Esophagus muscularis mucosa (tissue), 4 donors: ENCODE measurements at regions of chr6 and their contacts with region 1.

Region 1: GRCh38 chr6:52284460-52285176 is at the start of gene MCM3:
- DNase-seq: peak; percentile 99
- H3K4me3 ChIP-seq: peak within 1 kb of the TSS; percentile 73 to 92 (median 83)
- H3K27ac ChIP-seq: peak within 1 kb of the TSS; percentile 70 to 87 (median 73)
- H3K4me1 ChIP-seq: peaks cover 13 to 21% (median 17%) of the 10 kb centered on the region in 4 donors
- H3K27me3 ChIP-seq: no peaks in the 10 kb centered on the region
- CTCF ChIP-seq: no peak
- EP300 ChIP-seq: no peak
- POLR2A ChIP-seq: no peak
- total RNA-seq, gene MCM3: 32.4 to 42.6 (median 41.1) TPM

Region 2: GRCh38 chr6:52361945-52362442 is 77.4 kb after region 1 on chr6 and contains the start of gene PAQR8:
- intact Hi-C with region 1: loop called (anchors 10 kb)
- DNase-seq: no peak
- H3K4me3 ChIP-seq: peak within 1 kb of the TSS; percentile 84 to 100 (median 89)
- H3K27ac ChIP-seq: peak within 1 kb of the TSS; percentile 82 to 88 (median 86)
- H3K4me1 ChIP-seq: peaks cover 16 to 71% (median 70%) of the 10 kb centered on the region in 4 donors
- H3K27me3 ChIP-seq: no peaks in the 10 kb centered on the region
- CTCF ChIP-seq: peak in 2 of 3 experiments; percentile 2 to 20
- EP300 ChIP-seq: no peak
- POLR2A ChIP-seq: no peak
- total RNA-seq, gene PAQR8: 11.1 to 32.5 (median 14.2) TPM

Region 3: DNA sequence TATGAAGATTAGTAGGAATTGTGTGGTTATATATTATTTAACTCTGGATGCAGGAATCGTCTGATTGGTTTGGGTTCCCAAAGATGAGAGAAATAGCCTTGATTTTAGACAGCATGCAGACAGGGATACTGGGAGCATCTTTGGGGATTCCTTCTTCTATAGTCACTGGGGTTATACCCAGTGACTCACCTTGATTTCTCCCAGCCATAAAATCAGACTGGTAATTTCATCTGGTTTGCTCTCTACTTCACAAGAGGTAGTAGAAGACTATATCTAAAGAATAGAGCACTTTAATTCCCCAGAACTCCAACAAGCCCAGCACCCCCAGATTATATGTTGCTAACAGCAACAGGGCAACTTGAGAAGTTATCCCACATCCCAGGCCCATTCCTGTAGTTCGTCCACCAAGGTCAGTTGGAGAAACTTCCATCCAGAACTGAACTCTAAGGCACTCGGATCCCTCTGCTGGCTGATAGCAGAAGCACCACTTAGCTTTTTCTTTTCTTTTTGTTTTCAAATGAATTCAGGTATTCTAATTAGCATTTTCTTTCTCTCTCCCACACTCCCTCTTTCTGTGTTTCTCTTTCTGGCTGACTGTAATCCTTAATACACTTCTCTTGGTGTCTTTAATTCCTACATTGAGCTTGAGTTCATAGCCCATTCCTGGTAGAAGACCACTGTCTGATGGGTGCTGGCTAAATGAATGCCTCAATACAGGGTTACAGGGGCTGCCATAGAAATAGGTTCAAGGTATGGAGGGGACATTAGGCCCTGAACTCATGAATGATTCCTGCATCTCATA is 115.1 kb after region 1 on chr6:
- intact Hi-C with region 1: loop called (anchors 2 kb)
- DNase-seq: no peak
- H3K4me3 ChIP-seq: no peak overlapping the region
- H3K27ac ChIP-seq: no peak overlapping the region
- H3K4me1 ChIP-seq: peaks cover 0 to 15% (median 5%) of the 10 kb centered on the region in 4 donors
- H3K27me3 ChIP-seq: no peaks in the 10 kb centered on the region
- CTCF ChIP-seq: peak; percentile 73 to 93 (median 81)
- EP300 ChIP-seq: no peak
- POLR2A ChIP-seq: no peak

Region 4: DNA sequence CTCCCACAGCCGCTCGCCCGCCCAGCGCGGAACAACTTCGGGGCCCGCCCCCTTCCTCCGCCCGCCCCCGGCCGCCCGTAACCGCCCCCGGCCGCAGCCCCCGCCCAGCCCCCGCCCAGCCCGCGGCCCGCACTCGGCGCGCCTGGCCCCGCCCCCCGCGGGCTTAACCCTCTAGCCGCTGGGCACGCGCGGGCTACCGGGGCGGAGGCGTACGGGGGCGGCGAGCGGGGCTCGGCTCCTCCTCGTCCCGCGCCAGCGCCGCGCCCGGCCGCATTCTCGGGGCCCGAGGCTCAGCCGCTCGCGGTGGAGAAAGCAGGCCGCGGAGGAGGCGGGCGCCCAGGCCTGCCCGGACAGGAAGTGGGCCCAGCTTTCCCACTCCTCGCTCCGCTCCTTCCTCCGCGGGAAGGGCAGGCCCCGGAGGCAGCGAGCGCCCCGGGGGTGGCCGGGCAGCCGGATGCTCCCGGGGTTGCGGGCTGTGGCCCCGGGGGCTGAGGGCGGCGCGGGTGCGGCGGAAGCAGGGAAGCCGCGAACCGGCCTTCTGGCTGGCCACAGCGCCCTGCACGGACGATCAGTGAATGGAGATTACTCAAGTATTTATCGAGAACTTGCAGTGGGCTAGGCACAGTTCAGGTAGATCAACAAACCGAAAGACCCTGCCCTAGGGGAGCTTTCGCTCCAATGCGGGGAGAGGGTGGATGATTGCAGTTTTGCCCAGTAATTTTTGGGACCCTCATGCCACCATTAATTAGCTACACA is 292.6 kb after region 1 on chr6 and contains the start of gene TRAM2:
- intact Hi-C with region 1: loop called (anchors 10 kb)
- DNase-seq: peak; percentile 95
- H3K4me3 ChIP-seq: peak within 1 kb of the TSS; percentile 88 to 92 (median 90)
- H3K27ac ChIP-seq: peak within 1 kb of the TSS; percentile 98 to 100 (median 99)
- H3K4me1 ChIP-seq: peaks cover 47 to 60% (median 54%) of the 10 kb centered on the region in 4 donors
- H3K27me3 ChIP-seq: no peaks in the 10 kb centered on the region
- CTCF ChIP-seq: peak in 2 of 3 experiments; percentile 7 to 32
- EP300 ChIP-seq: no peak
- POLR2A ChIP-seq: peak; percentile 49
- total RNA-seq, gene TRAM2: 13.3 to 23.8 (median 18.5) TPM

Region 5: GRCh38 chr6:52664186-52664990 is 379.8 kb after region 1 on chr6:
- intact Hi-C with region 1: loop called (anchors 5 kb)
- DNase-seq: peak; percentile 96
- H3K4me3 ChIP-seq: peak overlapping the region; percentile 57 to 86 (median 76)
- H3K27ac ChIP-seq: peak overlapping the region; percentile 63 to 86 (median 80)
- H3K4me1 ChIP-seq: peaks cover 16 to 20% (median 16%) of the 10 kb centered on the region in 4 donors
- H3K27me3 ChIP-seq: no peaks in the 10 kb centered on the region
- CTCF ChIP-seq: no peak
- EP300 ChIP-seq: no peak
- POLR2A ChIP-seq: peak; percentile 27